Activated B cell treated with CpG ODN at 0.5 μM for 24 hours (primary cell): ENCODE measurements at regions of chr13 and their contacts with region 1.

Region 1: GRCh38 chr13:97975848-97976609 is 22.6 kb downstream of the IPO5 start:
- DNase-seq: peak; percentile 95
- ATAC-seq: peak; percentile 91
- H3K4me3 Mint-ChIP-seq: peak overlapping the region; percentile 92
- H3K27ac Mint-ChIP-seq: peak overlapping the region; percentile 94
- H3K4me1 Mint-ChIP-seq: peaks cover 39% of the 10 kb centered on the region
- H3K27me3 Mint-ChIP-seq: no peaks in the 10 kb centered on the region
- CTCF ChIP-seq: no peak

Region 2: DNA sequence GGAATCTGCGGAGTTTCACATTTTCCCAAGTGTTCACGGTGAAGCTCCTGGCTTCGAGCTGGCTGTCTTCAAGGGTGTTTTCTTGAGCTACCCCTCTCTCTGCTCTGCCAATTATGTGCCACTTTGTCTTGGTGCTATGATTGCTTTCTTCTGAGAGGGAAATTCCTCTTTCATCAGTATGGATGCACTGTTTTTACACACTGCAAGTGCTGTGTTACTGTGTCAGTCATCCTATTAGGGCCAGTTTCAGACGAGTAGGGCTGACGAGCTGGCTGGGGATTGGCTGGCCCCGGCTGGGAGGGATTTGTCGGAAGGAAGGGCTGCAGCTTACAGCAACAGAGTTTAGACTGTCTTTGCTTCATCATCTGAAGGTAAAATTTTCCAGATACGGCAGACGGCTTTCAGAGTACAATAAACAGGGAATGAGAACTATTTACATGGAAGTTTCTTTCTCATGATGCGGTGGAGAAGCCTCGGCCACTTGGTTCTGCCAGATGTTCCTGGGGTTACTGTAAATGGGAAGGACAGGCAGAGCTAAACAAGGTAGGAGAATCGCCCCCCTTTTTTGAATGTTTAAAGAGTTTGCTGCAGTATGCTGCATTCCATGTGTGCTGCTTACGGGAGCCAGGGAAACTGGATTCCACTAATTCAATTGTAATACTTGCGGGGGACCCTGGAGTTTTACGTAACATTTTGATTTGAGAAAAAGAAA is 753.9 kb before region 1 on chr13 and contains the start of gene MBNL2:
- CTCF ChIA-PET with region 1: no interaction called
- POLR2A ChIA-PET with region 1: no interaction called
- intact Hi-C with region 1: loop called (anchors 2 kb)
- DNase-seq: peak; percentile 67
- ATAC-seq: peak; percentile 98
- H3K4me3 Mint-ChIP-seq: peak within 1 kb of the TSS; percentile 89
- H3K27ac Mint-ChIP-seq: peak within 1 kb of the TSS; percentile 92
- H3K4me1 Mint-ChIP-seq: peaks cover 51% of the 10 kb centered on the region
- H3K27me3 Mint-ChIP-seq: no peaks in the 10 kb centered on the region
- CTCF ChIP-seq: no peak
- total RNA-seq, gene MBNL2: 15.3 and 18.8 TPM in 2 replicates

Region 3: GRCh38 chr13:97359181-97360057 is 616.6 kb before region 1 on chr13:
- CTCF ChIA-PET with region 1: no interaction called
- POLR2A ChIA-PET with region 1: no interaction called
- intact Hi-C with region 1: loop called (anchors 10 kb)
- DNase-seq: no peak
- ATAC-seq: peak; percentile 94
- H3K4me3 Mint-ChIP-seq: no peak overlapping the region
- H3K27ac Mint-ChIP-seq: no peak overlapping the region
- H3K4me1 Mint-ChIP-seq: no peaks in the 10 kb centered on the region
- H3K27me3 Mint-ChIP-seq: no peaks in the 10 kb centered on the region
- CTCF ChIP-seq: peak; percentile 33

Region 4: DNA sequence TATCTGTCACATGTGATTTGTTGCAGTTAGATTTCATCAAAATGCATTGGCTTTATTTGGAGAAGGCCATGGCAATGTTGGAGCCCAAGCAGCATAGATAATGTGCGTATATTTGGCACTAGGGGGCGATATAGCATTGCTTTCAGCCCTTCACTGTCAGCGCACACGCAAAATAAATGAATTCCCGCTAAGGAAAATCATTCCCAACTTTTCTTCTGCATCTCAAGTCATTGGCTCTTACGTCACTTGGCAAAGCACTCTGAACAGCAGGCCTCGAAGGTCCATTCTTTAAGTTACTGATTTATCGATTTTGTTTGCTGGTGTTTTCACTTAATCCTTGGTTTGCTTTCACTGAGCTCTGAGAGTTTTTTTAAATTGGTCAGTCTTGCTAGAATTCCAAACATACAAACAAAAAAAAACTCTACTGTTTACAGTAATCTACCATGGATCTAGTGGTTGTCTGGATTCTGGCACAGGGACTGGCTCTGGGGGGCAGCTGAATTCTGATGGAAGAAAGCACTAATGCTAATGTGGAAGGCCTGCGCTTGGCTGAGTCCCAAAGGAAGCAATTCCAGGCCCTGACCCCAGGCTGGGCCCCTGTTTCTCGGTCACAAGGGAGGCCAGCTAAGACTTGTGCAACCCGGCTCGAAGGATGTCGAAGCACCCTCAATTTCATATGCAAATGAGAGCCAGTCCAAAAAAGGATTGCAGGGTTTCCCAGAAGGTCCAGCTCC is 120.3 kb before region 1 on chr13:
- CTCF ChIA-PET with region 1: no interaction called
- POLR2A ChIA-PET with region 1: no interaction called
- intact Hi-C with region 1: loop called (anchors 2 kb)
- DNase-seq: no peak
- ATAC-seq: no peak
- H3K4me3 Mint-ChIP-seq: no peak overlapping the region
- H3K27ac Mint-ChIP-seq: no peak overlapping the region
- H3K4me1 Mint-ChIP-seq: peaks cover 8% of the 10 kb centered on the region
- H3K27me3 Mint-ChIP-seq: peaks cover 3% of the 10 kb centered on the region
- CTCF ChIP-seq: peak; percentile 23

Region 5: GRCh38 chr13:97986835-97987234 is 10.8 kb after region 1 on chr13:
- CTCF ChIA-PET with region 1: no interaction called
- POLR2A ChIA-PET with region 1: interaction called, 3 read pairs
- intact Hi-C with region 1: loop called (anchors 1 kb)
- DNase-seq: no peak
- ATAC-seq: peak; percentile 78
- H3K4me3 Mint-ChIP-seq: no peak overlapping the region
- H3K27ac Mint-ChIP-seq: no peak overlapping the region
- H3K4me1 Mint-ChIP-seq: peaks cover 9% of the 10 kb centered on the region
- H3K27me3 Mint-ChIP-seq: no peaks in the 10 kb centered on the region
- CTCF ChIP-seq: no peak

Region 6: GRCh38 chr13:98576963-98577822 is 601.2 kb after region 1 on chr13 and contains the start of gene STK24:
- CTCF ChIA-PET with region 1: no interaction called
- POLR2A ChIA-PET with region 1: no interaction called
- intact Hi-C with region 1: loop called (anchors 5 kb)
- DNase-seq: peak; percentile 82
- ATAC-seq: peak; percentile 78
- H3K4me3 Mint-ChIP-seq: peak within 1 kb of the TSS; percentile 88
- H3K27ac Mint-ChIP-seq: peak within 1 kb of the TSS; percentile 91
- H3K4me1 Mint-ChIP-seq: peaks cover 45% of the 10 kb centered on the region
- H3K27me3 Mint-ChIP-seq: no peaks in the 10 kb centered on the region
- CTCF ChIP-seq: no peak
- total RNA-seq, gene STK24: 74.8 and 84.8 TPM in 2 replicates

Region 7: DNA sequence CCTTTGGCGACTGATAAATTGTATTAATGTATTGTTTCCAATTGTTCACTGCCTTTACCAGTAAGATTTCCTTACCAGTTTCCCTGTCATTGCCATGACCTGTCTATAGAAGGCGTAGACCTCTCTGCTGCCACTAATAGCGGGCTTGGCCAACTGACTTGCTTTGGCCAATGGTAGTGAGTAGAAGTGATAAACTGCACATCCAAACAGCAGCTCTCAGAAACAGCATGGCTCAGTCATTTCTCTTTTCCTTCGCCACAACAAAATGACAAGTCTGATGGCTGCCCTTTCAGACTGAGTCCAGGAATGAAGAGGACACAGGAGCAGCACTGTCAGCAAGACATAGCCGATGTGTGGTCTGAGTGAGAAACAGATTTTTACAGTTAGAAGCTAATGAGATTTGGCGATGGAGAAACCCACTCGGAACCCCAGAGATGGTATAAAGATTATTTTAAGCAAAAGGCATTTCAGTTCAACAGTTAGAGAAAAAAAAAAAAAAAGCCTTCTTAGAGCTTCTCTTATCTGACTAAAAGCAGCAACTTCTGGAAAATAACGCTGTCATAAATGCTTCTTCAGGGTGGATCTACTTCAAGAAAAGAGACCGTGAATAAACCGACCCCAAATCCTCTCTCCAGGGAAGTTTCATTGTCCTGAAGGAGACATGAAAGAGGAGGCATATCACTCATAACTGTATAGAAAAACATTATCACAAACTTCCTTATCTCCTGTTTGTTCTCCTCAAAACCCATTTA is 1483.2 kb after region 1 on chr13:
- CTCF ChIA-PET with region 1: no interaction called
- POLR2A ChIA-PET with region 1: interaction called, 17 read pairs
- intact Hi-C with region 1: no loop called
- DNase-seq: no peak
- ATAC-seq: no peak
- H3K4me3 Mint-ChIP-seq: no peak overlapping the region
- H3K27ac Mint-ChIP-seq: no peak overlapping the region
- H3K4me1 Mint-ChIP-seq: peaks cover 12% of the 10 kb centered on the region
- H3K27me3 Mint-ChIP-seq: no peaks in the 10 kb centered on the region
- CTCF ChIP-seq: no peak